HepG2 (cell line): ENCODE measurements at regions of chr22 and their contacts with region 1.

Region 1: DNA sequence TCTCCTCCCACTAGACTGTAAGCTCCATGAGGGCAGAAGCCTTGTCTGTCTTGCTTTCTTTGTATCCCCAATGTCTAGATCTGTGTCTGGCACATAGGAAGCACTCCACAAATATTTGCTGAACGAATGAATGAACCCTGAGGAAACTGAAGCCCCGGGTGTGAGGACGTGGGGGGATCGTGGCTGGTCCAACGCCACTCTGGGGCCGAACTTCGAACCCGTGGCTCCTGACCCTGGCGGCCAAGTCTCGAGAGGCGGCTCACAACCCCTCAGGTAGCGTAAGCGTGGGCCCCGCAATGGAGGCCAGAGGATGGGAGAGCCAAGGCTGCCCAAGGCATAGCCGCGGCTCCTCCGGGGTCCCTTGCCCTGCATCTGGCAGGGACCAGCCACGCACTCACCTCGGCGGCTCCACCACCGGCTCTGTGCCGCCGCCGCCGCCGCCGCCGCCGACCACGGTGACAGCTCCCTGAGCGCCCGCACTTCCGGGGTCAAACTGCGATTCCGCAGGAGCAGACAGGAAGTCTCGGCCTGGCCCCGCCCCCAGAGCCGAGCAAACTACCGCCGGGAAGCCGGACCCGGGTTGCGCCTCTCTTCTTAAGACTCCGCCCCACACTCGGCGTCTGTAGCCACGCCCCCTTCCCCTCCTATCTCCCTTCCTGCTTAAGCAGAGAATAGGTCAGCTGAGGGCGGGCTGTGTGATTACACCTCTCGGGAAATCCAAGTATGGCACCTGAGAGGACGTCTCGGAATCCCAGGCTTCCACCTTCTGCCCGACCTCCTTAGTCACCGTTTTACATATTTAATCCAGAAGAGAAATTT is at the start of gene ASCC2:
- DNase-seq: peak; percentile 96
- ATAC-seq: peak; percentile 96
- H3K4me3 ChIP-seq: peak within 1 kb of the TSS; percentile 65 to 96 (median 82)
- H3K27ac ChIP-seq: peak within 1 kb of the TSS; percentile 52
- H3K4me1 ChIP-seq: peaks cover 39% of the 10 kb centered on the region
- H3K27me3 ChIP-seq: no peaks in the 10 kb centered on the region; a peak in 2 of 5 replicates
- CTCF ChIP-seq: no peak
- EP300 ChIP-seq: no peak; a peak in 1 of 4 replicates
- POLR2A ChIP-seq: peak; percentile 68 to 84
- RAD21 ChIP-seq: peak; percentile 42
- total RNA-seq, gene ASCC2: 24.3 and 26.3 TPM in 2 replicates

Region 2: DNA sequence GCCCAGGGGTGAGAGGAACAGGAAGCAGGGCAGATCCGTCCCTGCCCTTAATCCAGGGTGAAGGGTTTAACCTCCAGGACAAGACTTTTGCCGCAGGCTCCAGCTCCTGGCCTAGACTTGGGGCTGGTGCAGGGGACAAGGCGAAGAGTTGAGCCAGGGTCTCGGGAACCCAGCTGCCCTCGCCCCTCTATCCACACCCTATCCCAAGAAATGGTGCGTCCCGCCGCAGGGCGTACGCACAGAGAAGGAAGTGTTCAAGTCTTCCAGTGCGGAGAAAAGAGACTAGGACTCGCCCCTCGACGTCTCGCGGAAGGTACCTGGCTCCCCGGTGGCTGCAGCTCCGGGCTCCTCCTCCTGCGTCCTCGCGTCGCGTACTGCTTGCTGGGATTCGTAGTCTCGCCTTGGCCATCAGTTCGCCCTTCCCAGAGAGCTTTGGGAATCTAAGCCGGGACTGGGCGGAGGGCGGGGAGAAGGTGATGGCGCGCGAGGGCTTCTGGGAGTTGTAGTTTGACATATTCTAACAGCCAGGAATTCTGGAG is 71.3 kb before region 1 on chr22 and contains the start of gene ZMAT5:
- CTCF ChIA-PET with region 1: no interaction called
- POLR2A ChIA-PET with region 1: interaction called, 8 read pairs
- in situ Hi-C with region 1: no loop called
- intact Hi-C with region 1: loop called (anchors 1 kb)
- DNase-seq: peak; percentile 96
- ATAC-seq: peak; percentile 94
- H3K4me3 ChIP-seq: peak within 1 kb of the TSS; percentile 95
- H3K27ac ChIP-seq: peak within 1 kb of the TSS; percentile 88
- H3K4me1 ChIP-seq: peaks cover 57% of the 10 kb centered on the region
- H3K27me3 ChIP-seq: peaks cover 0 to 4% of the 10 kb centered on the region in 2 experiments; a peak in 1 of 5 replicates
- CTCF ChIP-seq: no peak
- EP300 ChIP-seq: 0 out of 4 replicates have a peak, but pooled peaks of 1 of the 2 experiments have one; percentile 2
- POLR2A ChIP-seq: peak; percentile 74 to 91
- RAD21 ChIP-seq: no peak
- total RNA-seq, gene ZMAT5: 27.8 and 34.7 TPM in 2 replicates